Transverse colon (tissue), 4 donors: ENCODE measurements at regions of chr9 and their contacts with region 1.

Region 1: DNA sequence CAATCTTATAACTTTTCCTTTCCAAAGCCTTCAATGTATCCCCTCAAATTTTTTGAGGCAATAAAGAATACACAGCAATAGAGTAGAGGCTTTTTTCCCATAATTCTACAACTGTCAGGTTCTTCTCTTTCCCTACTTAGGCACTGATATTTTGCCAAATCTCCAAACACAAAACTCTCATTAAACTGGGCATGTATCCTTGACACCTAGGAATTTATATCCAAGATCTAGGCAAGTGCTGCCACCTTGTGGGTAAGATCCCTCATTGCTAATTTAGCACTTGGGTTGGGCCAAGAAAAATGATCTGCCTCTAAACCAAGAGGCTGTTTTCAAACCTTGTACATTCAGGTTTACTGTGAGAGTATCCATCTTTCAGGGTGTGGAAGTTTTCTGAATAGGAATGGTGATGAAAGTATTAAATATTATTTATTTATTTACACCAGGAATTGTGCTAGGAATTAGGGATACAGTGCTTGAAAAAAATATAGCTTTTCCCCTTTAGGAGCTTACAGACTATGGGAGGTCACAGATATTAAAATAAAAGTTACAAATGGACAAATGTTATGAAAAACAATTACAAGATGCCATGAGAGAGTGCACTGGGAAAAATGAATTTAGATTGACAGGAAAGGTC is 17.6 kb downstream of the TSTD2 start:
- DNase-seq: peak; percentile 70
- H3K4me3 ChIP-seq: no peak overlapping the region
- H3K27ac ChIP-seq: no peak overlapping the region
- H3K4me1 ChIP-seq: peaks cover 0 to 10% (median 1%) of the 10 kb centered on the region in 4 donors
- H3K27me3 ChIP-seq: no peaks in the 10 kb centered on the region
- CTCF ChIP-seq: peak; percentile 81 to 88 (median 82)
- EP300 ChIP-seq: no peak
- POLR2A ChIP-seq: no peak

Region 2: DNA sequence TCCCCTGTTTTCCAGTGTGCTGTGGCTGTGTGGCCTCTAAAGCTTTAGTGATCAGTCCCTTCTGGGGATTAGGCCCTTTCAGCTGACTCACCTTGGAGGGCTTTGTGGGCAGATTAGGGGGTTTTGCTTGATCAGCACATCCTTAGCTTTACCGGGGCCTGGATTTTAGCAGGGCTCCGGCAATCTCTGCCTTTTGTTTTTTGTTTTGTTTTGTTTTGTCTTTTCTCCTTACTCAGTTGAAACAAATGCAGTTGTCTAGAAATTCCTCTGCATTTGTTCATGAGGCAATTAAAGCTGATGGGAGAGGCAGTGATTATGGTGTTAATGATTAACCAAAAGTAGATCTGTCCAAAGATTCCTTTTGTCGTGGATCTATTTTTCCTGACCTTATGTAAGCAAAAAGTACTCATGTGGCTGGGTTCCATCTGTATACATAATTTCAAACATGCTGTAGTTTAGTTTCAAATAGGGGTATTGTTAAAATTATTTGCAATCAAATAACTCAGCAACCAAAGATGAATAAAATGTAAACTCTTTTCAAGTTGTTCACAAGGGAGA is 208.9 kb before region 1 on chr9:
- in situ Hi-C with region 1: no loop called
- intact Hi-C with region 1: loop called (anchors 5 kb)
- DNase-seq: no peak
- H3K4me3 ChIP-seq: peak overlapping the region in 1 of 4 donors; percentile 16
- H3K27ac ChIP-seq: peak overlapping the region; percentile 80 to 88 (median 84)
- H3K4me1 ChIP-seq: peaks cover 0 to 39% (median 21%) of the 10 kb centered on the region in 4 donors
- H3K27me3 ChIP-seq: no peaks in the 10 kb centered on the region
- CTCF ChIP-seq: no peak
- EP300 ChIP-seq: no peak
- POLR2A ChIP-seq: no peak

Region 3: DNA sequence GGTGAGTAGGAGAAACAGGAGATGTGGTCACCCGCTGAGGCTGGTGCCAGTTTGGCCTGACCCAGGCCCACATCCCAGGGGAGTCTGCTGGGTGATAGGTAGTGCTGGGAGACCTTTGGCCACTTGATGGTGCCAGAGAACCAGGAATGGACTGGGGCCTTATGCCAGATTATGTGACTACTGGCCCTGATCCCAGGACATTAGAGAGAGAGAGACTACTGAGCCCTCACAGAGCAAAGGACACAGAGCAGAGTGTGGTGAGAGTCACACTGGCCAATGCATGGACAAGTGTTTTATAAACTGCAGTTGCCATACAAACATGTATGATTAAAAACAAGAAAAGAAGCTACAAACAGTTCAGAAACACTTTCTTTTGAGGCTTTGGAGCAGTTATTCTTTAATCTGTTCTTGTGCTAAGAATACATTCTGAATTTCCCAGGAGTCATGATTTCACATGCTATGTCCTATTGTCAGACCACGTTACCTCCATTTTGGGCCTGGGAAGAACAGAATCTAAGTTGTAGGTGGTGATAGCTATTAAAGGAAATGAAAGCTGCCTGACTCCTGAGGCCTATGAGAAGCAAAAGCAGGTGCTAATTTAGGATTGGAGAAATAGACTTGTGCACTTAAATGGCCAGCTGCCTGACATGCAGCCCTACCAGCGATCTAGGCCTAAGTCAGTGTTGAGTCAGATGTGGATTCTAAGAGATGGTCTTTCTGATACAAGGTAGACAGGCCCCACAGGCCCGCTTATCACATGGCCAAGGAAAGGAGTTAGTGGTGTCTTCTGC is 146.7 kb before region 1 on chr9:
- in situ Hi-C with region 1: loop called in 2 of 4 experiments (anchors 10 kb)
- intact Hi-C with region 1: loop called (anchors 5 kb)
- DNase-seq: peak; percentile 75
- H3K4me3 ChIP-seq: no peak overlapping the region
- H3K27ac ChIP-seq: peak overlapping the region; percentile 7 to 65 (median 29)
- H3K4me1 ChIP-seq: peaks cover 0 to 12% (median 2%) of the 10 kb centered on the region in 4 donors
- H3K27me3 ChIP-seq: no peaks in the 10 kb centered on the region
- CTCF ChIP-seq: peak; percentile 63 to 84 (median 71)
- EP300 ChIP-seq: no peak
- POLR2A ChIP-seq: no peak

Region 4: DNA sequence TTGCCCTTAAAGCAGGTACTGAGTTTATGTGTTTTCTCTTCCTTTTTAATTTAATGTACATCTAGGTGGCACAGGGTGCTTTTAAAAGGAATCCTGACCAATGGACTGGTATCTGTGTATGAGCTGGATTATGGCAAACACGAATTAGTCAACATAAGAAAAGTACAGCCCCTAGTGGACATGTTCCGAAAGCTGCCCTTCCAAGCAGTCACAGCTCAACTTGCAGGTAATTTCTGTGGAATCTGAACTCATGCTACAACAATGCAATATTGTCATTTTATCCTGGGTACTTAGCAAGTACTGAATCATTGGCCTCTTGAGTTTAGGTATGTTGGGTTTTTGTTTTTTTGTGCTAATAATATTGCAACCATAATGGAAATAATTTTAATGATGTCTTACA is 128.4 kb before region 1 on chr9:
- in situ Hi-C with region 1: no loop called
- intact Hi-C with region 1: no loop called
- DNase-seq: no peak
- H3K4me3 ChIP-seq: no peak overlapping the region
- H3K27ac ChIP-seq: no peak overlapping the region
- H3K4me1 ChIP-seq: peaks cover 0 to 5% (median 2%) of the 10 kb centered on the region in 4 donors
- H3K27me3 ChIP-seq: no peaks in the 10 kb centered on the region
- CTCF ChIP-seq: peak in 1 of 5 experiments; percentile 6
- EP300 ChIP-seq: no peak
- POLR2A ChIP-seq: no peak